Aorta (tissue), 5 donors: ENCODE measurements at regions of chr3 and their contacts with region 1.

Region 1: DNA sequence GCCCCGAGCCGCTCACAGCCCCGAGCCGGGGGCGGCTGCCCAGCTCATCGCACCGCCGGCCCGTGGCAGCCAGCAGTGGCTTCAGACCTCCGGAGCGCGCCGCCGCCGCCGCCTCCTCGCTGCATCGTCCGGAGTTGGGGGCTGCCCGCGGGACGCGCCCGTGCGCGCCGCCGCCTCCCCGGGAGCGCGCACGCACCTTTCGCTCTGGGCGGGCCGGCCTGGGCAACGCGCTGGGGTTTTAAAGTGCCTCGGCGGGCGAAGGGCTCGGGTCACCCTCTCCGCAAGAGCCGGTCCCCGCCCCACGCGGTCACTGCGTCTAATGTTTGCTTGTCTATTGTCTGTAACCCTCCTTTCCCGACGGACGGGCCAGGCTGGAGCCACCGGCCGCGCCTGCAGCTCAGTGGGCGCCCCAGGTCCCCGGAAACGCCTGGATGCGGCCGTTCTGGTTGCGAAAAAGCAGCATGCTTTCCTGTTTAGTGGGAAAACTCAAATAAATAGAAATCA is at the start of gene RYK:
- DNase-seq: peak; percentile 88 to 92
- ATAC-seq: peak; percentile 96
- H3K4me3 ChIP-seq: peak within 1 kb of the TSS; percentile 78 to 96
- H3K27ac ChIP-seq: peak within 1 kb of the TSS in 1 of 2 donors; percentile 88
- H3K4me1 ChIP-seq: peaks cover 0 to 5% of the 10 kb centered on the region in 2 donors
- H3K27me3 ChIP-seq: no peaks in the 10 kb centered on the region
- total RNA-seq, gene RYK: 71.8 to 73.5 TPM

Region 2: DNA sequence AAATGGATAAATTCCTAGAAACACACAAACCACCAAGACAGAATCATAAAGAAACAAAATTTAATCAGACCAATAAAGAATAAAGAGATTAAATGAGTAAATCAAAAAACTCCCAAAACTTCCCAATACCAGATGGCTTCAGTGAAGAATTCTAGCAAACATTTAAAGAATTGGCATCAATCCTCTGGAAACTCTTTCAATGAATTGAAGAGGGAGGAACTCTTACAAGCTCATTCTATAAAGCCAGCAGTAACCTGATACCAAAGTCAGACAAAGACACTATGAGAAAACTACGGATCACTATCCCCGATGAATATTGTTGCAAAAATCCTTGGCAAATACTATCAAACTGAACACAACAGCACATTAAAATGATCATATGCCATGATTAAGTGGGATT is 139.2 kb before region 1 on chr3:
- intact Hi-C with region 1: no loop called
- DNase-seq: no peak
- ATAC-seq: no peak
- H3K4me3 ChIP-seq: no peak overlapping the region
- H3K27ac ChIP-seq: no peak overlapping the region
- H3K4me1 ChIP-seq: no peaks in the 10 kb centered on the region
- H3K27me3 ChIP-seq: no peaks in the 10 kb centered on the region

Region 3: GRCh38 chr3:134299185-134299887 is 48.6 kb after region 1 on chr3:
- intact Hi-C with region 1: loop called in 1 of 2 experiments (anchors 5 kb)
- DNase-seq: peak in 1 of 2 donors; percentile 30
- ATAC-seq: peak; percentile 73
- H3K4me3 ChIP-seq: no peak overlapping the region
- H3K27ac ChIP-seq: no peak overlapping the region
- H3K4me1 ChIP-seq: no peaks in the 10 kb centered on the region
- H3K27me3 ChIP-seq: no peaks in the 10 kb centered on the region

Region 4: DNA sequence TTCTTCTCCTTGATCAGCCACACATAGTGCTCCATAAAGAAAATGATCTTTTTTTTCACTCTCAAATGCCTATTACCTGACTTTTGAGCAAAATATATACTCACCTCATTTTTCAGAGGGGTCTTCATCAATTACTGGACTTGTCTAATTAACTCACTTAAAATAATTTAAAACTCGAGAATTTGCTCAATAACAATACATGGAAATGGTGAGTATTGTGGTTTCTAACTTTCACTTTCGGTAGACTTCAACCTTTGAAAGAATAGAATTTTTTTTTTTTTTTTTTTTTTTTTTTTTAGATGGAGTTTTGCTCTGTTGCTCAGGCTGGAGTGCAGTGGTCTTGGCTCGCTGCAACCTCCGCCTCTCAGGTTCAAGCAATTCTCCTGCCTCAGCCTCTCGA is 526.6 kb after region 1 on chr3:
- intact Hi-C with region 1: no loop called
- DNase-seq: no peak
- ATAC-seq: no peak
- H3K4me3 ChIP-seq: no peak overlapping the region
- H3K27ac ChIP-seq: no peak overlapping the region
- H3K4me1 ChIP-seq: no peaks in the 10 kb centered on the region
- H3K27me3 ChIP-seq: no peaks in the 10 kb centered on the region